ENCODE measurements at regions of chr12 and their contacts with region 1.

Region 1: DNA sequence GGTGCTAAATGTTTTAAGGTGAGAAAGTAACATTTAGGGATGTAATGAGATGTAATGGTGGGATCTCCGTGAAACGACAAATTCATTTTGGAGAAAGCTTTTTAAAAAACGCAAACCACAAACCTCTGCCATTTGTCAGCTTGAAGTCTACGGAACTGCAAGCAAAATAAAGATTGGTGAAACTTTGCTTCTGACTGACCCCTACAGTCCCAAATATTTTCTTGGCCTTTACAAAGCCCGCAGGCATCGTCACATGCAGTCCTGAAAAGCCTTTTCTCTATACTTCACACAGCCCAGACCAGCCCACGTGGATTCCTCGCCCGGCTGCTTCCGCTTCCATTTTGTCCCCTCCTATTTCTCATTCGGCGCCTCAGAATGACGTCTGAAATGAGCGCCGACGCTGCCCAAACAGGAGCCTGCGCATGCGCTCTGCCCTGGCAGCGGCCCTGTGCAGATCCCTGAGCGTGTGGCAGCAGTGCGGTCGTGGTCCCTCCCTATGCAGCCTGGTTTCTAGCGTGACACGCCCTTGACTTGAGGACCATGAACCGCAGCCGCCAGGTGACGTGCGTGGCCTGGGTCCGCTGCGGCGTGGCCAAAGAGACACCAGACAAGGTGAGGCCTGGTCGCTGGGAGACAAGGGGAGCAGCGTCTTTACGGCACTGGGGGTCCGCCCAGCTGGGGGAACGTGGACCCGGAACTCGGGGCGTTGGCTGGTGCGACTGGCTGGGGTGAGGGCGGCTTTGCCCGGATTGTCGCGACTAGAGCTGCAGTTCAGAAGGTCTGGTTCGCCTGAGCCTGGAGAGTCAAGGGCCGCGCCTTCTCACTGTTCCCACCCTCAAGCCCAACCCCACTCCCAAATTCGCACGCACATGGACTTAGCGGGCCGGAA is at the start of gene PWP1:
- DNase-seq: peak; percentile 94
- ATAC-seq: peak; percentile 93
- H3K4me3 ChIP-seq: peak within 1 kb of the TSS; percentile 97 to 99
- H3K27ac ChIP-seq: peak within 1 kb of the TSS; percentile 71
- H3K4me1 ChIP-seq: peaks cover 0 to 14% of the 10 kb centered on the region in 2 experiments; a peak in 3 of 4 replicates
- H3K27me3 ChIP-seq: no peaks in the 10 kb centered on the region
- CTCF ChIP-seq: no peak
- POLR2A ChIP-seq: peak; percentile 77
- RAD21 ChIP-seq: no peak
- total RNA-seq, gene PWP1: 48.2 TPM

Region 2: DNA sequence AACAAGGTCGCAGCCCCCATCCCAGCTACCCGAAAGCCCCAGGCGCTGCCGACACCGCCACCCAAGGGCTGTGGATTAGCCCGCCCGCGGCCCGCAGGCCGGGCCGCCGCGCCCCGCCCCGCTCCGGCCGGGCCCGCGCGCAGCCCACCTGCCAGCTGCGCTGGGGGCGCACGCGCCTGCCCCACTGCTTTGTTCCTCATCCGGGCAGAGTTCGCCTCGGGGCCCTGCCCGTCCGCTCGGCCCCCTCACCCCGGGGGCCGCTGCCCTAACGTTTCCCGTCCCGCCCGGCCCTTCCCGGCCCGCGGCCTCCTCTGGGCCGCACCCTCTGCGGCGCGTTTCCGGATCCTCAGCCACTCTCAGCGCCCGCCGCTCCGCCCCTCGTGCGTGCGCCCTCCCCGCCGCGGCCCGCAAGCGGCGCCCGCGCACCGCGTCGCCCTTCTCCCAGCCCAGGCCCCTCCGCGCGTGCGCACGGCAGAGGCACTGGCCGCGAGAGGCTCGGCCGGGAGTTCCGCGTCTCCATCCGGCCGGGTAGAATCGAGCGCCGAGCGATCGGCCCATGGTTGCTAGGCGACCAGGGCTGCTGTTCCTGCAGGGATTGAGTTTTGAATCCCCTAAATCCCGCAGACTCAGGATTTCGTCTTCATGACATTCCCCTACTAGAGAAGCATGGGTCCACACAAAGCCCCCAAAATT is 75.4 kb after region 1 on chr12 and contains the start of gene PRDM4:
- CTCF ChIA-PET with region 1: no interaction called
- POLR2A ChIA-PET with region 1: no interaction called
- RAD21 ChIA-PET with region 1: no interaction called
- intact Hi-C with region 1: loop called (anchors 2 kb)
- DNase-seq: peak; percentile 80
- ATAC-seq: peak; percentile 93
- H3K4me3 ChIP-seq: peak within 1 kb of the TSS; percentile 85 to 91
- H3K27ac ChIP-seq: peak within 1 kb of the TSS; percentile 72
- H3K4me1 ChIP-seq: peaks cover 8 to 21% of the 10 kb centered on the region in 2 experiments
- H3K27me3 ChIP-seq: no peaks in the 10 kb centered on the region
- CTCF ChIP-seq: no peak
- POLR2A ChIP-seq: peak; percentile 66
- RAD21 ChIP-seq: 0 out of 2 replicates have a peak, but pooled peaks have one; percentile 25
- total RNA-seq, gene PRDM4: 32.9 TPM